GM12878 (cell line): ENCODE measurements at regions of chr9 and their contacts with region 1.

Region 1: GRCh38 chr9:72827950-72828731 is 124.7 kb downstream of the ALDH1A1 start:
- DNase-seq: no peak
- ATAC-seq: no peak
- H3K4me3 ChIP-seq: no peak overlapping the region
- H3K27ac ChIP-seq: no peak overlapping the region
- H3K4me1 ChIP-seq: no peaks in the 10 kb centered on the region
- H3K27me3 ChIP-seq: no peaks in the 10 kb centered on the region
- CTCF ChIP-seq: no peak
- EP300 ChIP-seq: no peak
- POLR2A ChIP-seq: no peak
- RAD21 ChIP-seq: no peak

Region 2: GRCh38 chr9:72599879-72600534 is 228.1 kb before region 1 on chr9:
- CTCF ChIA-PET with region 1: no interaction called
- POLR2A ChIA-PET with region 1: no interaction called
- RAD21 ChIA-PET with region 1: no interaction called
- SMC1A ChIA-PET with region 1: no interaction called
- in situ Hi-C with region 1: no loop called
- intact Hi-C with region 1: loop called (anchors 5 kb)
- DNase-seq: no peak
- ATAC-seq: peak; percentile 27; the same call in 2 of the 3 replicates
- H3K4me3 ChIP-seq: no peak overlapping the region
- H3K27ac ChIP-seq: no peak overlapping the region
- H3K4me1 ChIP-seq: no peaks in the 10 kb centered on the region
- H3K27me3 ChIP-seq: no peaks in the 10 kb centered on the region
- CTCF ChIP-seq: peak in 1 of 3 experiments; percentile 19; a peak in 1 of 6 replicates
- EP300 ChIP-seq: no peak
- POLR2A ChIP-seq: no peak
- RAD21 ChIP-seq: no peak

Region 3: GRCh38 chr9:72844440-72844768 is 16.3 kb after region 1 on chr9:
- CTCF ChIA-PET with region 1: no interaction called
- POLR2A ChIA-PET with region 1: no interaction called
- RAD21 ChIA-PET with region 1: no interaction called
- SMC1A ChIA-PET with region 1: no interaction called
- in situ Hi-C with region 1: no loop called
- intact Hi-C with region 1: no loop called
- DNase-seq: no peak
- ATAC-seq: no peak
- H3K4me3 ChIP-seq: no peak overlapping the region
- H3K27ac ChIP-seq: no peak overlapping the region
- H3K4me1 ChIP-seq: no peaks in the 10 kb centered on the region
- H3K27me3 ChIP-seq: no peaks in the 10 kb centered on the region
- CTCF ChIP-seq: no peak
- EP300 ChIP-seq: no peak
- POLR2A ChIP-seq: no peak
- RAD21 ChIP-seq: no peak

Region 4: DNA sequence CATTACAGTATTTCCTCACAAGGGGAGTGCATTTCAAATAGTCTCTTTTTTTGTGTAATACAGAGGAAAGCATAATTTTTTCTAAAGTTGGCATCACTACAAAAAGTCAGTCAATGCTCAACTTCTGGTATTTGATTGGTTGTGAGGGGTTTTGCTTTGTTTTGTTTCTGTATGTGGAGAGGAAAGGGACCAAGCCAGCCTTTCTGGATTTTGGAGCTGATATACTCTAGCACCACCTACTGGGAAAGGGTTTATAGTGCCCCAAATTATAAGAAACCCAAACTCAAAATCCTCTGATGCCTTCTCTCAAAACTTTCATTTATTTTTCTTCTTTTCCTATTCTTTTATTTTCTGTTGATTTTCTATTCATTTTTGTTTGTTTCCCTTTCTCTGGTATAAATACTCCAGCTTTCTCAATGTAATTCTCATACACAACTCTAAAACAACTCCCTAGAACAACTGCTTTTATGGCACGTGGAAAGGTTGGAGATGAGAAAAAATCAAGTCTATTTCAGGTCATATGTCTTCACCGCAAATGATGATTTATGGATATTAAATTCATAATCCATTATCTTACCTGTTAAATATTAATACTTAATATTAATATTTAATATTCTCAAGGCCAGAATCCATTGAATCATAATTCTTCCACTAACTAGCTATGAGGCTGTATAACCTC is 254.0 kb after region 1 on chr9:
- CTCF ChIA-PET with region 1: no interaction called
- POLR2A ChIA-PET with region 1: no interaction called
- RAD21 ChIA-PET with region 1: no interaction called
- SMC1A ChIA-PET with region 1: no interaction called
- in situ Hi-C with region 1: no loop called
- intact Hi-C with region 1: no loop called
- DNase-seq: no peak
- ATAC-seq: peak; percentile 69
- H3K4me3 ChIP-seq: no peak overlapping the region
- H3K27ac ChIP-seq: no peak overlapping the region
- H3K4me1 ChIP-seq: no peaks in the 10 kb centered on the region
- H3K27me3 ChIP-seq: no peaks in the 10 kb centered on the region
- CTCF ChIP-seq: peak; percentile 64 to 76 (median 67)
- EP300 ChIP-seq: no peak
- POLR2A ChIP-seq: no peak
- RAD21 ChIP-seq: peak; percentile 75